BJ (cell line): ENCODE measurements at regions of chr6 and their contacts with region 1.

Region 1: DNA sequence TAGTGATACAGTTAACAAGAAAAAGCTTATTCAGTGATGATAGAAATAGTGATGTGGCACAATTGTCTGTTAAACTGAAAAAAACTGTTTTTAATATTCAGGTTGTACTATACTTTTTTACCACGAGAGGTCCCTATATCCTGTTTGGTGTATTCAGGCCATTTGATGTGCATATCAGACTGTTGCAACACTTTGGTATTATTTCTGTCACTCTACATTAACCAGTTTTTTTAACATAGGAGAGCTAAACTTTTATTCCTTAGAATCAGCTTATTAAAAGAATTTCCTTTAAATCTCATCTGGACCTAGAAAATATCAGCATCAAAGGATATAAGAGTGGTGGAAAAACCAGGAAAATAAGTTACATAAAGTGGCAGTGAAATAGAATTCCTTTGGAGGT is 36.8 kb downstream of the TSPYL4 start:
- DNase-seq: no peak
- H3K4me3 ChIP-seq: no peak overlapping the region
- H3K27me3 ChIP-seq: no peaks in the 10 kb centered on the region
- CTCF ChIP-seq: peak; percentile 49

Region 2: DNA sequence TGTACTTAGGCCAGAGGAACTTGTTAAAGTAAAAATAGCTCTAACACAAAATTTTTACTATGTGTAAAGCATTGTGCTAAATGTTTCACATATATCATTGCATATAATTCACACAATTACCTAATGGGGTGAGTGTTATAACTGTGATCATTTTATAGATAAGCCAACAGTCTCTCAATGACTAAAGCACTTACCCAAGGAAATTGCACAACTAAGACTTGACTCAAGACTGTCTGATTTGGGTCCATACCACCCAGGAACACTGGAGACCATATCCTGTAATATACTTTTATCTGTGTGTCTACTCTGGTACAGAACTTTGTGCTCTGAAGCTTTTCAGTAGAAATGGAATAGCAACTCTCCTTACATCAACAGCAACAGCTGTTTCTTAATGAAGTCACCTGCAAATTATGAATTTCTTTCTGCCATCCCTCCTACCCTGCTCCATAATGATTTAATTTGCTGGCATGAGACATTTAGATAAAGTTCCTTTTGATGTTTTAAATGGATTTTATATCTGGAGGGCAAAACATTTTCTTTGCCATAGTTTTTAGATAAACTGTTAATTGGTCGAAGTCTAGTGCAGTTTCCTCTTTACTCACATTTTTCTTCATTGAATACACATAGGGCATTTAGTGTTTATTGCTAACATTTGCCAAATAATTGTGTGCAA is 10.7 kb before region 1 on chr6:
- CTCF ChIA-PET with region 1: interaction called, 21 read pairs
- POLR2A ChIA-PET with region 1: no interaction called
- DNase-seq: no peak
- H3K4me3 ChIP-seq: no peak overlapping the region
- H3K27me3 ChIP-seq: no peaks in the 10 kb centered on the region
- CTCF ChIP-seq: no peak

Region 3: DNA sequence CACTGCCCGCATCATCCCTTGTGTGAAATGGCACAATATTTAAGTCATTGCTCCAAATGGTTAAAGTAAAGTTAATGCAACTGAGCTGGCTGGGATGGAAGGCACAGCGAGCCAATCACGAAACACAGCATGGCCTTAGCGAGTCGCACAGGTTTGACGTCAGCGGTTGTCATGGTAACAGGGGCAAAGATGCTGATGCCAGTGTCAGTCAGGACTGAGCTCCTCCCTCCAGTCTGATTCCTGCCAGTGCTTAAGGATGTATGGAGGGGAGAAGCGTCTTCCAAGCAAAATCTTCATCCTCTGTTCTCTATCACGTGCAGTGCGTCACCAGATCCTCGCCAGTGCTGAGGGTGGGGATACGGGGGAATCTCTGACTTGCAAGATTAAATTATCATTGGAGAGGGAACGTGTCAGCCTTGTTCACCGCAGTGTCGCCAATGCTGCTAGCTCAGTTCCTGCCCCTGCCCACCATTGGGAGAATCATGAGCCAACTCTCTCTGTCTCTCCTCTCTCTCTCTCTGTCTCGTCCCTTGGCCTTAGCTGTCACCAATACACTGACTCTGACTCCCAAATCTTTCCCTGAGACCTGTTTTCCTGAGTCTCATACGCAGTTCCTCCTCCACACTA is 12.3 kb after region 1 on chr6:
- CTCF ChIA-PET with region 1: interaction called, 14 read pairs
- POLR2A ChIA-PET with region 1: no interaction called
- DNase-seq: peak; percentile 46
- H3K4me3 ChIP-seq: peak overlapping the region; percentile 28
- H3K27me3 ChIP-seq: no peaks in the 10 kb centered on the region
- CTCF ChIP-seq: no peak

Region 4: GRCh38 chr6:116253505-116254296 is 36.6 kb after region 1 on chr6 and contains the start of gene TSPYL4:
- CTCF ChIA-PET with region 1: interaction called, 12 read pairs
- POLR2A ChIA-PET with region 1: no interaction called
- DNase-seq: peak; percentile 72
- H3K4me3 ChIP-seq: peak within 1 kb of the TSS; percentile 99
- H3K27me3 ChIP-seq: no peaks in the 10 kb centered on the region
- CTCF ChIP-seq: no peak
- polyA plus RNA-seq, gene TSPYL4: 33.7 and 34.2 TPM in 2 replicates

Region 5: GRCh38 chr6:116314878-116315277 is 97.8 kb after region 1 on chr6:
- CTCF ChIA-PET with region 1: no interaction called
- POLR2A ChIA-PET with region 1: no interaction called
- DNase-seq: no peak
- H3K4me3 ChIP-seq: no peak overlapping the region
- H3K27me3 ChIP-seq: no peaks in the 10 kb centered on the region
- CTCF ChIP-seq: no peak